A673 (cell line): ENCODE measurements at regions of chr14 and their contacts with region 1.

Region 1: GRCh38 chr14:23294734-23295561 is 7.7 kb downstream of the PPP1R3E start:
- DNase-seq: peak; percentile 81
- H3K4me3 ChIP-seq: no peak overlapping the region
- H3K27ac ChIP-seq: no peak overlapping the region
- H3K4me1 ChIP-seq: peaks cover 14% of the 10 kb centered on the region
- H3K27me3 ChIP-seq: no peaks in the 10 kb centered on the region
- CTCF ChIP-seq: peak; percentile 93

Region 2: GRCh38 chr14:23259426-23259825 is 35.5 kb before region 1 on chr14:
- CTCF ChIA-PET with region 1: no interaction called
- POLR2A ChIA-PET with region 1: no interaction called
- intact Hi-C with region 1: loop called (anchors 2 kb)
- DNase-seq: peak; percentile 52
- H3K4me3 ChIP-seq: no peak overlapping the region
- H3K27ac ChIP-seq: no peak overlapping the region
- H3K4me1 ChIP-seq: no peaks in the 10 kb centered on the region
- H3K27me3 ChIP-seq: peaks cover 12% of the 10 kb centered on the region
- CTCF ChIP-seq: no peak